A673 (cell line): ENCODE measurements at regions of chr15 and their contacts with region 1.

Region 1: DNA sequence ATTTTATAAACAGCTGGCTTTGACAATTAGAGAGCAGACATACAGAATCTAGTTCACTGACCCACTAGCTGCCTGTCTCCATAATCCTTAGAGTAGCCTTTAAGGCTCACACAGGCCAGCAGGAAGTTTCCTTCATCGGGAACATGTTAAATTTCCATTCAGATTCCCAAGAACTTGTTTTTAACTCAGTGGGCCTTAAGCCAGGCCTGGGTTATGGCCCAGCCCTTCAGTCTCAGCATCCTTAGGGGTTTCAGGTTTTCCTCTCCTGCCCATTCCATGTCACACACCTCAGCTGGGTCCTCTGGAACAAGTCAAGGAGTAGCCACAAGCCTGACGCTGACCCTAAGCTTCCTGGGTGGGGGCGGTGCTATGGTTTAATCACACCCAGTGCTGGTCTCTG is 15.0 kb downstream of the CDAN1 start:
- DNase-seq: no peak
- H3K4me3 ChIP-seq: no peak overlapping the region
- H3K27ac ChIP-seq: no peak overlapping the region
- H3K4me1 ChIP-seq: no peaks in the 10 kb centered on the region
- H3K27me3 ChIP-seq: no peaks in the 10 kb centered on the region
- CTCF ChIP-seq: no peak

Region 2: GRCh38 chr15:42736793-42737528 is 15.0 kb after region 1 on chr15 and contains the start of gene CDAN1:
- CTCF ChIA-PET with region 1: no interaction called
- POLR2A ChIA-PET with region 1: interaction called, 12 read pairs
- intact Hi-C with region 1: no loop called
- DNase-seq: peak; percentile 90
- H3K4me3 ChIP-seq: peak within 1 kb of the TSS; percentile 82
- H3K27ac ChIP-seq: peak within 1 kb of the TSS; percentile 88
- H3K4me1 ChIP-seq: peaks cover 6% of the 10 kb centered on the region
- H3K27me3 ChIP-seq: no peaks in the 10 kb centered on the region
- CTCF ChIP-seq: no peak
- total RNA-seq, gene CDAN1: 26.9 and 29.5 TPM in 2 replicates

Region 3: DNA sequence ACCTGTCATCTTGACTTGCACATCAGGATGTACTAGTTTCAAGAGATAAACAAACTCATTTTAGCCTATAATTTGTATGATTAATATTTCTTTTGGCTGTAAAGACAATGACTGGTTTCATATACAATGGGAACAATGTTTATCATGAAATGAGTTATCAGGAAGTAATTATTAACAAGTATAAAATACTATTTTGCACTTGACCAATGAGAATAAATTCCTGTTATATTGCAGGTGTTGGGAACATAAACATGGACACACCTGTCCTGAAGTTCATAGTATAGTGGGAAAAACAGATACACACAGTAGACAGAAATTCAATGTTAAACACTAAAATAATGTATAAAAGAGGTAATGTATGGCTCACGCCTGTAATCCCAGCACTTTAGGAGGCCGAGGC is 327.0 kb after region 1 on chr15:
- CTCF ChIA-PET with region 1: no interaction called
- POLR2A ChIA-PET with region 1: no interaction called
- intact Hi-C with region 1: no loop called
- DNase-seq: no peak
- H3K4me3 ChIP-seq: no peak overlapping the region
- H3K27ac ChIP-seq: no peak overlapping the region
- H3K4me1 ChIP-seq: no peaks in the 10 kb centered on the region
- H3K27me3 ChIP-seq: no peaks in the 10 kb centered on the region
- CTCF ChIP-seq: no peak